IMR-90 (cell line): ENCODE measurements at regions of chr9 and their contacts with region 1.

Region 1: GRCh38 chr9:38467404-38467803 is 43.1 kb upstream of the IGFBPL1 start:
- DNase-seq: no peak
- ATAC-seq: no peak
- H3K4me3 ChIP-seq: no peak overlapping the region
- H3K27ac ChIP-seq: no peak overlapping the region
- H3K4me1 ChIP-seq: no peaks in the 10 kb centered on the region
- H3K27me3 ChIP-seq: peaks cover 5% of the 10 kb centered on the region
- CTCF ChIP-seq: no peak
- POLR2A ChIP-seq: no peak
- RAD21 ChIP-seq: no peak

Region 2: GRCh38 chr9:38408719-38409118 is 58.7 kb before region 1 on chr9:
- CTCF ChIA-PET with region 1: no interaction called
- POLR2A ChIA-PET with region 1: interaction called, 3 read pairs
- dilution Hi-C with region 1: no loop called
- in situ Hi-C with region 1: no loop called
- intact Hi-C with region 1: loop called (anchors 10 kb)
- DNase-seq: no peak
- ATAC-seq: no peak
- H3K4me3 ChIP-seq: no peak overlapping the region
- H3K27ac ChIP-seq: no peak overlapping the region
- H3K4me1 ChIP-seq: no peaks in the 10 kb centered on the region
- H3K27me3 ChIP-seq: peaks cover 84% of the 10 kb centered on the region
- CTCF ChIP-seq: no peak
- POLR2A ChIP-seq: no peak
- RAD21 ChIP-seq: no peak